ENCODE measurements at regions of chr19 and their contacts with region 1.

Region 1: DNA sequence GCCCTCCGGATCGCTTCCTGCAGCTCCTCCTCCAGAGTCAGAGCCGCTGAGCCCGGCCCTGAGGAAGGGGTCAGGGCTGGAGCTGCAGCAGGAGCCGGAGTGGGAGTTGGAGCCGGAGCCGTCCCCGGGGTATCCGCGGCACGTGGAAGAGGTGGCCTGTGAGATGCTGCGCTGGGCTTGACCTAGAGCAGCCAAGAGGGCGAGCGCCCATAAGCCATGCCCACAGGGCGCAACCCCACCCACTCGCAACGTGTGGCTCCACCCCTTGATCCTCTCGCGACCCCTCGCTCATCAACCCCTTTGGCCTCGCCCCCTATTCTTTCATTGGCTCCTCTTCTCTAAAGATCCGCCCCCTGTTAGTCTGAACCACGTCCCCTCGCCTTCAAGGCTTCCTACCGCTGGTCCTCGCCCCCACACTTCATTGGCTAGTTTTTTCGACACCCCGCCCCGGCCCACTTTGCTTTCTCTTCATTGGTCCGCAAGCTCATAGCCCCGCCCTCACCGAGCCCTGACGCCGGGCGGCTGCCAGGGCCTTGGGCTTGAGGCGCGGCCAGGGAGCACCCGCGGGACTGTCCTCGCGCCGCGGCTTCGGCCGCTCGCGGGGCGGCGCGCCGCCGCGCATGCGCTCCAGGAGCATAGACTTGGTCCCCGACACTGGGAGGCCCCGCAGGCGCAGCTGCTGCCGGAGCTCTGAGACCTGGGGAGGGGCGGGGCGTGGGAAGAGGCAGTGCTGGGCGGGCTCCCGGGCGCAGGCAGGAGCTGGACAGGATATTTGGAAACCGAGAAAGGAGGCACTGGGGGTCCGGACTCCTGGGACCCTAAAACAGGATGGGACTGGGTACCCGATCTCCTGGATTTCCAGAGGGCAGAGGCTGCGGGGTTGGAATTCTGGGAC is 5.4 kb downstream of the MAMSTR start:
- DNase-seq: peak; percentile 99 to 100
- H3K4me3 ChIP-seq: peak overlapping the region; percentile 83
- H3K27ac ChIP-seq: peak overlapping the region; percentile 51
- H3K4me1 ChIP-seq: peaks cover 19% of the 10 kb centered on the region
- H3K27me3 ChIP-seq: no peaks in the 10 kb centered on the region
- CTCF ChIP-seq: no peak

Region 2: GRCh38 chr19:48363810-48364563 is 350.1 kb before region 1 on chr19 and contains the starts of genes SYNGR4 and TMEM143:
- CTCF ChIA-PET with region 1: no interaction called
- POLR2A ChIA-PET with region 1: interaction called, 14 read pairs
- intact Hi-C with region 1: no loop called
- DNase-seq: peak; percentile 99 to 100
- H3K4me3 ChIP-seq: peak within 1 kb of the TSS; percentile 72
- H3K27ac ChIP-seq: peak within 1 kb of the TSS; percentile 63
- H3K4me1 ChIP-seq: peaks cover 7% of the 10 kb centered on the region
- H3K27me3 ChIP-seq: no peaks in the 10 kb centered on the region
- CTCF ChIP-seq: no peak
- total RNA-seq, gene SYNGR4: 1.3 and 2.1 TPM in 2 replicates
- total RNA-seq, gene TMEM143: 24.8 and 31.3 TPM in 2 replicates

Region 3: DNA sequence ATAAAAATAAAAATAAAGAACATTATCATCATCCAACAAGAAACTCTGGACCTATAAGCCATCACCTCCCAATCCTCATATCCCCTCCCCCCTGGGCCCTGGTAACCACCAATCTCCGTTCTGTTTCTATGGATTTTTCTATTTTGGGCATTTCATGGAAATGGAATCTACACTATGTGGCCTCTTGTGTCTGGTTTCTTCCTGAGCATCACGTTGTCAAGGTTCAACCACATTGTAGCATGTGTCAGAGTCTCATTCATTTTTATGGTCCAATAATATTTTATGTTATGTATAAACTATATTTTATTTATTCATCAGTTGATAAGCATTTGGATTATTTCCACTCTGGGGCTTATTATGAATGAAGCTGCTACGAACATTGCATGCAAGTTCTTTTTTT is 135.2 kb before region 1 on chr19:
- CTCF ChIA-PET with region 1: no interaction called
- POLR2A ChIA-PET with region 1: no interaction called
- intact Hi-C with region 1: no loop called
- DNase-seq: no peak
- H3K4me3 ChIP-seq: no peak overlapping the region
- H3K27ac ChIP-seq: no peak overlapping the region
- H3K4me1 ChIP-seq: peaks cover 4% of the 10 kb centered on the region
- H3K27me3 ChIP-seq: no peaks in the 10 kb centered on the region
- CTCF ChIP-seq: no peak

Region 4: DNA sequence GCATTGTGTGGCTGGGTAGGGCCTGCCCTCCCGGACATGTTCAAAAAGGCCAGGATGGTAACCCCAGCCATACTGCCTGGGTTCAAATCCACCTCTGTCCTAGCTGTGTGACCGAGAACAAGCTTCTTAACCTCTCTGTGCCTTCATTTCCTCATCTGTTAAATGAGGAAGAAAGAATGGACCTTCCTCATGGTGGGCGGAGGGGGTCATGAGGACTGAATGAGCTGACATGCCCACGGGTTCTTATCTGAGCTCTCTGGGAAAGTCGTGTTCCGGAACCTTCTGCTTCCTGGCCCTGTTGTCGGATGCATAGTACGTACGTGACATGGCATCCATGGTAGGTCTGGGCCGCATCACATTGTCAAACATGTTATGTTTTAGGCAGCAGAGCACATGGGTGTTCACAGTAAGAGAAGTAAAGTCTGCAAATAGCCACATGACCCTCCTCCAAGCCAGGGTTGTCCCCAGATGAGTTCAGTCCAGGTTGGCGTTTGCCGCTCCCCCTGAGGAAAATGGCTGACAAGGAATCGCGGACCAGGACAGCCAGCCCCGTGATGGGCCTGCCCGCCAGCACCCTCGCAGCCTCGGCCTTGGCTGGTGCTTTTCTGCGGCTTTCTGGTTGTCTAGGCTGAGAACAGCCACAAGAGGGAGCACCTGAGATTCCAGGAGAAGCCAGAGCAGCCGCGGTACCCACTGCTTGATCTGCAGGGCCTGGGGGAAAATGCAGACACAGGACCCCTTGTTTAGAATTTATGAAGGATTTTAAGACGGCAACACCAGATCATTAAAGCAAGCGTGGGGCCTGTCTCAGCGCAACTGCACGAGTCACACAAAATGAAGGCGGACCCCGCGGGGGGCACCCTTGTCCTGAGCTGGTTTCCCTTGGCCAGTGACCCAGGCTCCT is 38.9 kb before region 1 on chr19:
- CTCF ChIA-PET with region 1: interaction called, 4 read pairs
- POLR2A ChIA-PET with region 1: no interaction called
- intact Hi-C with region 1: loop called (anchors 2 kb)
- DNase-seq: peak; percentile 71 to 72
- H3K4me3 ChIP-seq: no peak overlapping the region
- H3K27ac ChIP-seq: no peak overlapping the region
- H3K4me1 ChIP-seq: peaks cover 32% of the 10 kb centered on the region
- H3K27me3 ChIP-seq: no peaks in the 10 kb centered on the region
- CTCF ChIP-seq: peak; percentile 92

Region 5: DNA sequence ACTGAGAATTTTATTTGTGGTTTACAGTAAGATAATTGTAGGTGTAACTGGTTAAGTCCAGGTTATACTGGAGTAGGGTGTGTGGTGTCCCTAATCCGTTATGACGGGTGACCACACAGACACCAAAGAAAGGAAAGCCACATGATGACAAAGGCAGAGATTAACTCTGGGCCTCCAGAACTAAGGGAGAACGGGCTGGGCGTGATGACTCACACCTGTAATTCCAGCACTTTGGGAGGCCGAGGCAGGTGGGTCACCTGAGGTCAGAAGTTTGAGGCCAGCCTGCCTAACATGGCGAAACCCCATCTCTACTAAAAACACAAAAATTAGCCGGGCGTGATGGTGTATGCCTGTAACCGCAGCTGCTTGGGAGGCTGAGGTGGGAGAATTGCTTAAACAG is 28.5 kb before region 1 on chr19:
- CTCF ChIA-PET with region 1: no interaction called
- POLR2A ChIA-PET with region 1: no interaction called
- intact Hi-C with region 1: no loop called
- DNase-seq: peak; percentile 76 to 79
- H3K4me3 ChIP-seq: no peak overlapping the region
- H3K27ac ChIP-seq: no peak overlapping the region
- H3K4me1 ChIP-seq: peaks cover 25% of the 10 kb centered on the region
- H3K27me3 ChIP-seq: no peaks in the 10 kb centered on the region
- CTCF ChIP-seq: no peak

Region 6: GRCh38 chr19:48696353-48697010 is 17.6 kb before region 1 on chr19:
- CTCF ChIA-PET with region 1: no interaction called
- POLR2A ChIA-PET with region 1: no interaction called
- intact Hi-C with region 1: loop called (anchors 2 kb)
- DNase-seq: peak in 1 of 2 experiments; percentile 27
- H3K4me3 ChIP-seq: peak overlapping the region; percentile 47
- H3K27ac ChIP-seq: no peak overlapping the region
- H3K4me1 ChIP-seq: peaks cover 24% of the 10 kb centered on the region
- H3K27me3 ChIP-seq: no peaks in the 10 kb centered on the region
- CTCF ChIP-seq: no peak

Region 7: GRCh38 chr19:48724796-48725753 is 11.0 kb after region 1 on chr19:
- CTCF ChIA-PET with region 1: interaction called, 15 read pairs
- POLR2A ChIA-PET with region 1: interaction called, 3 read pairs
- intact Hi-C with region 1: no loop called
- DNase-seq: peak; percentile 37 to 51
- H3K4me3 ChIP-seq: no peak overlapping the region
- H3K27ac ChIP-seq: no peak overlapping the region
- H3K4me1 ChIP-seq: no peaks in the 10 kb centered on the region
- H3K27me3 ChIP-seq: no peaks in the 10 kb centered on the region
- CTCF ChIP-seq: no peak

Region 8: GRCh38 chr19:48738557-48739399 is 24.7 kb after region 1 on chr19:
- CTCF ChIA-PET with region 1: interaction called, 6 read pairs
- POLR2A ChIA-PET with region 1: interaction called, 4 read pairs
- intact Hi-C with region 1: loop called (anchors 1 kb)
- DNase-seq: peak; percentile 74 to 96
- H3K4me3 ChIP-seq: peak overlapping the region; percentile 58; the same call in 1 of the 2 replicates
- H3K27ac ChIP-seq: no peak overlapping the region
- H3K4me1 ChIP-seq: no peaks in the 10 kb centered on the region; the same call in 1 of the 2 replicates
- H3K27me3 ChIP-seq: no peaks in the 10 kb centered on the region
- CTCF ChIP-seq: no peak

Region 9: DNA sequence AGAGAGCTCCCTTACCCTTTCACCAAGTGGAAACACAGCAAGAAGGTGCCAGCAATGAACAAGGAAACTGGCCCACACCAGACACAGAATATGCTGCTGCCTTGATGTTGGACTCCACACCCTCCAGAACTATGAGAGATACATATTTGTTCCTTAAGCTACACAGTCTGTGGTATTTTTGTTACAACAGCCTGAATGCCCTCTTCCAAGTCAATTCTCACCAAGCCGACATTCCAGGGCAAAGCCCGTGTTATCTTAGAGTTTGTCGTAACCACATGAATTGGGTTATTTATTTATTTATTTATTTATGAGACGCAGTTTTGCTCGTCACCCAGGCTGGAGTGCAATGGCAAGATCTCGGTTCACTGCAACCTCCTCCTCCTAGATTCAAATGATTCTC is 56.1 kb after region 1 on chr19:
- CTCF ChIA-PET with region 1: no interaction called
- POLR2A ChIA-PET with region 1: no interaction called
- intact Hi-C with region 1: no loop called
- DNase-seq: peak; percentile 59 to 98
- H3K4me3 ChIP-seq: peak overlapping the region; percentile 19; the same call in 1 of the 2 replicates
- H3K27ac ChIP-seq: peak overlapping the region; percentile 92
- H3K4me1 ChIP-seq: peaks cover 32% of the 10 kb centered on the region
- H3K27me3 ChIP-seq: no peaks in the 10 kb centered on the region
- CTCF ChIP-seq: no peak

Region 10: GRCh38 chr19:48965040-48965805 is 251.1 kb after region 1 on chr19 and contains the start of gene FTL:
- CTCF ChIA-PET with region 1: no interaction called
- POLR2A ChIA-PET with region 1: interaction called, 17 read pairs
- intact Hi-C with region 1: no loop called
- DNase-seq: peak; percentile 92 to 99
- H3K4me3 ChIP-seq: peak within 1 kb of the TSS; percentile 84
- H3K27ac ChIP-seq: peak within 1 kb of the TSS; percentile 95
- H3K4me1 ChIP-seq: peaks cover 39% of the 10 kb centered on the region
- H3K27me3 ChIP-seq: no peaks in the 10 kb centered on the region
- CTCF ChIP-seq: no peak
- total RNA-seq, gene FTL: 3,402 and 3,822 TPM in 2 replicates

Region 11: GRCh38 chr19:50024724-50025023 is 1310.6 kb after region 1 on chr19:
- CTCF ChIA-PET with region 1: no interaction called
- POLR2A ChIA-PET with region 1: no interaction called
- intact Hi-C with region 1: no loop called
- DNase-seq: no peak
- H3K4me3 ChIP-seq: peak overlapping the region; percentile 63
- H3K27ac ChIP-seq: peak overlapping the region; percentile 27
- H3K4me1 ChIP-seq: peaks cover 27% of the 10 kb centered on the region
- H3K27me3 ChIP-seq: no peaks in the 10 kb centered on the region
- CTCF ChIP-seq: no peak

Measured in PC-9 (cell line).